Activated T-helper 1 cell treated with anti-CD3 and anti-CD28 coated beads, Interleukin-12 subunit alpha, Interleukin-12 subunit beta, Interleukin-2, Interleukin-4 antibody, amounts not matched to agents 30 ng/mL and 10 ng/mL and 1 ng/mL, durations not matched to agents 14 hours and 24 hours and 36 hours (primary cell): ENCODE measurements at regions of chr4 and their contacts with region 1.

Region 1: DNA sequence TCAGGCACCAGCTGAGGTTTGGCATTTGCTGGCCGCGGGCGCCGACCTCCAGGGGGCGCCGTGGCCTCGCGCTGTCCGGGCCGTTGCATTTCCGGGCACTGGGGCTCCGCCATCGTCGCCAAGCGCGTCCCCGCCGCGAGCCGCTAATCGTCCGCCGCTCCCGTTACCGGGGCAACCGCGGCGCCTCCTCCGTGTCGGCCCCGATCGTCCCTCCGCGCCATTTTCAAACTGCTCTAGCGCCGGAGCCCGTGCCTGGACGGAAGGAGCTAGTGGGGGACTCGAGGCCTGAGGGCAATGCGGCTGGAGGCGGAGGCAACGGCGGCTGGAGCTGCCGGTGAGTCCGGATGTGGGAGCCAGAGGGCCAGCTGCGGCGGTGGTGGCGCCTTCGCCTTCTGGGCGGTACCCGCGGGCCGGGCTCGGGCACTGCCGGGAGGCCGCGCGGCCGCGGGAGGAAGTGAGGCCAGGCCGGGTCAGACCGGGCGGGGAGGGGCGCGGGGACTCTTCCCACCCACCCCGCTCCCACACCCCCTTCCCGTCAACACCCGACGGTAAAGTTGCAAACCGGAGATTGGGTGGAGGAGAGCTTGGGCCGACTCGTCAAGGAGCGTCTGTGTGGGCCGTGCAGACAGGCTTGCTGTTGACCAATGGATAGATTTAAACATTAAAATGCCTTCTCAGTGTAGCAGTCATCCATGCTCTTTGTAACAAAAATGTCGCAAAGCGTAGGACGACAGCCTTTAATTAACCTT is at the start of gene CEP135:
- DNase-seq: peak; percentile 91
- H3K4me3 Mint-ChIP-seq: peak within 1 kb of the TSS; percentile 86
- H3K27ac Mint-ChIP-seq: peak within 1 kb of the TSS; percentile 92
- H3K4me1 Mint-ChIP-seq: peaks cover 44% of the 10 kb centered on the region
- H3K27me3 Mint-ChIP-seq: no peaks in the 10 kb centered on the region
- total RNA-seq, gene CEP135: 19.3 and 19.9 TPM in 2 replicates

Region 2: DNA sequence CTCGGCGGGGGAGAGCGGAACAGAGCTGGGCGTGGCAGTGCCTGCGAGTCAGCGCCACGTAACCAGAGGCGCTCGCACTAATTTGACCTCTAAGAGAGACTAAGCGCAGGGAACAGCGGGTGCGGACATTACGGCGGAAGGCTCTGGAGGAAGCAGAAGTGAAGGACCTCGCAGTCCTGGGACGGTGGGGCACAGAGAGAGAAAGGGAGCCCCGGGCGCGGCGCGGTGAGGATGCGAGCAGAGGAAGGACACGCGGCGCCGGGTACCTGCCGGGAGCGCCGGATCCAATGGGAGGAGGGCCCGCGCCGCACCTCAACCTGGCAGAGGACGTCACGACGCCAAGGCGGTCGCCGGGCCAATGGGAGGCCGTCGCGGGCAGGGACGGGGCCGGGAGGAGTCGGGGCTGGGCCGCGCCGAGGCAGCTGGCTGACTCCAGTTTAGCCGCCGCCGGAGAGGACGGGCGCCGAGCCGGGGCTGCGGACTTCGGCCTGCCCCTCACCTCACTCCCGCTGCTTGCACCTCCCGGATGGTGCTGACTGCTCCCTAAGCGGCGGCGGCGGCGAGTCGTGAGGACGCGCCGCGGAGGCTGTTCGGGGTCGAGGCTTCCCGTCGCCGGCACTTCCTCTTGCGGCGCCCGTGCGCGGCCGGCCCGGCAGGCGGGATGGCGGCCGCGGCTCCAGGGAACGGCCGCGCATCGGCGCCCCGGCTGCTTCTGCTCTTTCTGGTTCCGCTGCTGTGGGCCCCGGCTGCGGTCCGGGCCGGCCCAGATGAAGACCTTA is 553.2 kb before region 1 on chr4 and contains the start of gene TMEM165:
- intact Hi-C with region 1: loop called (anchors 5 kb)
- DNase-seq: peak; percentile 88
- H3K4me3 Mint-ChIP-seq: peak within 1 kb of the TSS; percentile 97
- H3K27ac Mint-ChIP-seq: peak within 1 kb of the TSS; percentile 96
- H3K4me1 Mint-ChIP-seq: peaks cover 40% of the 10 kb centered on the region
- H3K27me3 Mint-ChIP-seq: peaks cover 3% of the 10 kb centered on the region
- total RNA-seq, gene TMEM165: 110 and 112 TPM in 2 replicates

Region 3: DNA sequence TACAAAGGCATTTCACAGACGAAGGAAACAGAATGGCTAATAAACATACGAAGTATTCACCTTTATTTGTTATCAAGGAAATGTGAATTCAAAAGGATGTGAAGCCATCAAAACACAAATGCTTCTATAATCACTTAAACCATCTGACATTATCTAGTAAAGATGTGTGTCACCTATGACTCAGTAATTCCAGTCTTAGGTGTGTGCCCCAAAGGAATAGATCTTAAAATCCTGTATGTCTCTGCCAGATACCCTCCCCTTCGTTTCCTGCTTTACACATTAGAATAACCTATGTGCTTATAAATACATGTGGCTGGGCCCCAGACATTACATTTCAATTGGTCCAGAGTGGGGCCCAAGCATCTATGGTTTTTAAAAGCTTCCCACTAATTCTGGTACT is 41.9 kb before region 1 on chr4:
- intact Hi-C with region 1: loop called (anchors 1 kb)
- DNase-seq: no peak
- H3K4me3 Mint-ChIP-seq: no peak overlapping the region
- H3K27ac Mint-ChIP-seq: peak overlapping the region; percentile 21
- H3K4me1 Mint-ChIP-seq: peaks cover 15% of the 10 kb centered on the region
- H3K27me3 Mint-ChIP-seq: no peaks in the 10 kb centered on the region

Region 4: DNA sequence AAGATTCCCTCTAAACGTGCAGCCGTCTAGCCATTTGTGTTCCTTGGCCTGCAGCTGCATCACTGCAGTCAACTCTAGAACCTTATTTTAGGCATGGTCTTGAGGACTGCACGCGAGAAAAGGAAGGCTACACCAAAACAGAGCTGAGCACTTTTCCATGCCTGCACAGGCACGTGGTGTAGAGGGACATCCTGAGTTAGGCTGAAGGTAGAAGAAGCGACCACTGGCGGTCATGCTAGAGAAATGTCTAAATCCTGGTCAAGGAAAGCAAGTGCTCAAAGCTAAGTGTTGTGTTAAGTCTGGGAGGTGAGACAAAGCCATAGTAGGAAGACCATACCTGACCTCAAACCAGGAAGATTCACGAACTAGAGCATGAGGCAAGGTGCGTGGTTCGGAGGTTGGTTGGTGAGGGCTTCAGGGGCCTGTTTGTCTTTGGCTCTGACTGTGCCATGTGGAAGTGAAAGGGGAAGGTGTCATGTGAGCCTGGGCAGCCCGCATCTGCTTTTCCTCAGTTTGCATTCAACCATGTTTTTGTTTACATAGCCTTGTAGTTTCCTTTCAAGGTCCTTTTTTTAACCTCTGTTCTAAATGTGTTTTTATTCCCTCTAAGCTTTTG is 234.6 kb after region 1 on chr4:
- intact Hi-C with region 1: loop called (anchors 1 kb)
- DNase-seq: no peak
- H3K4me3 Mint-ChIP-seq: no peak overlapping the region
- H3K27ac Mint-ChIP-seq: no peak overlapping the region
- H3K4me1 Mint-ChIP-seq: peaks cover 35% of the 10 kb centered on the region
- H3K27me3 Mint-ChIP-seq: no peaks in the 10 kb centered on the region

Region 5: DNA sequence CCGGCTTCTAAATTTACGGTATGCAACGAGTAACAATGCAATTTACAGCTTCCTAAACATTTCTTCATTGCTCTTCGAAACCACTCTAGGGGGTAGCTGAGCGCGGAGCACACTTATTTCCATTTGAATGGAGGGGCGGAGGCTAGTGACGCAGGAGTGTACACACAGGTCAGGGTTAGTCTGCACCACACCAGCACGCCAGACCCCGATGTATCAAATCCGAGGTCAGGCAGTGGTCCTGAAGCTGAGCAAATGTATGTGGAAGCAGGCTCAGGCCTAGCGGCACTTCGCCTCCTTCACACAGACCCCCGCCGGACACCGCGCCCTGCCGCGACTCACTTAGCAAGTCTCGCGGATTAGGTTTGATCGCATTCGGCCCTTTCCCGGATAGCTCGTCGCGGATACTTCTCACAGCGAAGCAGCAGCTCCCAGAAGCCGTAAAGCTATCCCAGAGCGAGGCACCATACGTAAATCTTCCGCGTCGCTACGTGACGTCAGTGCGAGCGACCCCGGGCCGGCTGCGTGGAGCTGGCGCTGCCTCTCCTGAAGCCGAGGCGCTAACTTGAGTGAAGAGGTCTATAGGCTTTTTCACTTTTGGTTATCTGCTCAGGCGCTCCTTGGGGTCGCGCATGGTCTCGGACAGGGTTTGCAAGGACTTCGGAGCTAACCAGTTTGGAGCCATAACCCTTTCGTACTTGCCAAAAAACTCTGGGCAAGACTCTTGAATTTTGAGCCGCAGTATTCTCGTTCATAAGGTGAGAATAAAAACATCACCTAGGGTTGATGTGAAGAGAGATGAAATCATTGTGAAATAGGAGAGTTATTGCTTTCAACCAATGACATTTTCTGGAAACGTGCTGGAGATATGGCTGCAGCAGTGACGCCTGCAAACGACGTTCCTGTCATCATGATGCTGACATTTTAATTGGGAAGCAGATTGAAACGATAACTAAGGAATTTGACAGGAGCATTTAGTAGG is 438.4 kb after region 1 on chr4 and contains the start of gene AASDH:
- intact Hi-C with region 1: loop called (anchors 1 kb)
- DNase-seq: peak; percentile 93
- H3K4me3 Mint-ChIP-seq: peak within 1 kb of the TSS; percentile 92
- H3K27ac Mint-ChIP-seq: peak within 1 kb of the TSS; percentile 97
- H3K4me1 Mint-ChIP-seq: peaks cover 26% of the 10 kb centered on the region
- H3K27me3 Mint-ChIP-seq: no peaks in the 10 kb centered on the region
- total RNA-seq, gene AASDH: 9.8 and 12.0 TPM in 2 replicates

Region 6: GRCh38 chr4:56648021-56648823 is 699.3 kb after region 1 on chr4:
- intact Hi-C with region 1: loop called (anchors 5 kb)
- DNase-seq: no peak
- H3K4me3 Mint-ChIP-seq: peak overlapping the region; percentile 50
- H3K27ac Mint-ChIP-seq: peak overlapping the region; percentile 87
- H3K4me1 Mint-ChIP-seq: peaks cover 62% of the 10 kb centered on the region
- H3K27me3 Mint-ChIP-seq: peaks cover 2% of the 10 kb centered on the region